Posterior vena cava (tissue), 2 donors: ENCODE measurements at regions of chr15 and their contacts with region 1.

Region 1: GRCh38 chr15:40912478-40912877 is 16.7 kb upstream of the DLL4 start:
- DNase-seq: no peak

Region 2: DNA sequence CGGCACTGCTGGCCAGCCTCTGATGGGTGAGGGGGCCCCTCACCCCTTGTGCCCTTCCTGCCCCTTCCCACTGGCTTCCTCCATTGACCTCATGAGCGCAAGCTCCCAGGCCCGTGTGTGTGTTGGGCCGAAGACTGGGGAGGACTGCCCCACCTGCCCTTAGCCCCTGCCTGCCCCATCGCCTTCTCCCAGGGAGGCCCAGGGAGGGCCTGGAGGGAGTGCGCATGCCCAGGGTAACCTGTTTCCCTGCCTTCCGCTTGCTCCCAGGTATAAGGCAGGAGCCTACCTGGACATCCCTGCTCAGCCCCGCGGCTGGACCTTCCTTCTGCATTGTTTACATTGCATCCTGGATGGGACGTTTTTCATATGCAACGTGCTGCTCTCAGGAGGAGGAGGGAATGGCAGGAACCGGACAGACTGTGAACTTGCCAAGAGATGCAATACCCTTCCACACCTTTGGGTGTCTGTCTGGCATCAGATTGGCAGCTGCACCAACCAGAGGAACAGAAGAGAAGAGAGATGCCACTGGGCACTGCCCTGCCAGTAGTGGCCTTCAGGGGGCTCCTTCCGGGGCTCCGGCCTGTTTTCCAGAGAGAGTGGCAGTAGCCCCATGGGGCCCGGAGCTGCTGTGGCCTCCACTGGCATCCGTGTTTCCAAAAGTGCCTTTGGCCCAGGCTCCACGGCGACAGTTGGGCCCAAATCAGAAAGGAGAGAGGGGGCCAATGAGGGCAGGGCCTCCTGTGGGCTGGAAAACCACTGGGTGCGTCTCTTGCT is 25.5 kb after region 1 on chr15:
- intact Hi-C with region 1: loop called in 1 of 2 experiments (anchors 2 kb)
- DNase-seq: peak; percentile 69